Left lung (tissue), 14 donors: ENCODE measurements at regions of chr7 and their contacts with region 1.

Region 1: DNA sequence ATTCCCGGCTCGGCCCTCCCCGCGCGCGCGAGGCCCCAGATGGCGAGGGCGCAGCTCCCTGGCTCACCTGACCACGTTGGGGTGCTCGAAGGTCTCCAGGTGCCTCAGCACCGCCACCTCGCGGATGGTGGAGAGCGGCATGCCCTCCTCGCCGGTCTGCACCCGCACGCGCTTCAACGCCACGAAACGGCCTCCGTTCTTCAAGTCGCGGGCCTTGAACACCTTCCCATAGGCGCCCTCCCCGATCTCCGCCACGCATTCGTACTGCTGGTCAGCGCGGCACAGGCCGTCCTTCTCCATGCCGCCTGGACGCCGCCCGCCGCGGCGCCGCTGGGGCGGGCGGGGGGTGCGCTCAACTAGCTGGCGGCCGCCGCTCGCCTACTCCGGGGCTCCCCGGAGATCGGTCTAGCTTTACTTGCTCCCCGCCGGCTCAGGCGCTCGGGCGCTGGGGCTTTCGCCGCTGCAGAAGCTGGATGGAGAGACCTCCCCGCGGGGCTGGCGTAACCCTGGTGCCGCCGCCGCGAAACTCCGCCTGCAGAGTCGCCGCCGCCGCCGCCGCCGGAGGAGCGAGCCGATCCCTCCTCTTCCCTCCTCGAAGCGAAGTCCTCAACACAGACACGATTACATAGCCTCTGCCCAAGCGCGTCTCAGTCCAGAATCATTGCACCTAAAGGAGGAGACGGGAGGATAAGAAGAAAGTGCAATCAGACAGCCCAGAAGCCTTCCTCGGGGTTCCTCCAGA is 3.2 kb downstream of the CDK6 start:
- DNase-seq: peak; percentile 77 to 96 (median 90)
- ATAC-seq: peak; percentile 85
- H3K4me3 ChIP-seq: peak overlapping the region; percentile 82 to 93
- H3K27ac ChIP-seq: peak overlapping the region; percentile 86 to 87
- H3K4me1 ChIP-seq: peaks cover 2 to 35% of the 10 kb centered on the region in 2 donors
- H3K27me3 ChIP-seq: no peaks in the 10 kb centered on the region
- CTCF ChIP-seq: peak; percentile 84 to 88

Region 2: GRCh38 chr7:92621026-92621540 is 212.1 kb before region 1 on chr7:
- intact Hi-C with region 1: loop called in 1 of 2 experiments (anchors 5 kb)
- DNase-seq: peak in 3 of 4 donors; percentile 71 to 89 (median 72)
- ATAC-seq: peak; percentile 96
- H3K4me3 ChIP-seq: no peak overlapping the region
- H3K27ac ChIP-seq: peak overlapping the region; percentile 28 to 31
- H3K4me1 ChIP-seq: peaks cover 0 to 21% of the 10 kb centered on the region in 2 donors
- H3K27me3 ChIP-seq: no peaks in the 10 kb centered on the region
- CTCF ChIP-seq: peak; percentile 58 to 61

Region 3: DNA sequence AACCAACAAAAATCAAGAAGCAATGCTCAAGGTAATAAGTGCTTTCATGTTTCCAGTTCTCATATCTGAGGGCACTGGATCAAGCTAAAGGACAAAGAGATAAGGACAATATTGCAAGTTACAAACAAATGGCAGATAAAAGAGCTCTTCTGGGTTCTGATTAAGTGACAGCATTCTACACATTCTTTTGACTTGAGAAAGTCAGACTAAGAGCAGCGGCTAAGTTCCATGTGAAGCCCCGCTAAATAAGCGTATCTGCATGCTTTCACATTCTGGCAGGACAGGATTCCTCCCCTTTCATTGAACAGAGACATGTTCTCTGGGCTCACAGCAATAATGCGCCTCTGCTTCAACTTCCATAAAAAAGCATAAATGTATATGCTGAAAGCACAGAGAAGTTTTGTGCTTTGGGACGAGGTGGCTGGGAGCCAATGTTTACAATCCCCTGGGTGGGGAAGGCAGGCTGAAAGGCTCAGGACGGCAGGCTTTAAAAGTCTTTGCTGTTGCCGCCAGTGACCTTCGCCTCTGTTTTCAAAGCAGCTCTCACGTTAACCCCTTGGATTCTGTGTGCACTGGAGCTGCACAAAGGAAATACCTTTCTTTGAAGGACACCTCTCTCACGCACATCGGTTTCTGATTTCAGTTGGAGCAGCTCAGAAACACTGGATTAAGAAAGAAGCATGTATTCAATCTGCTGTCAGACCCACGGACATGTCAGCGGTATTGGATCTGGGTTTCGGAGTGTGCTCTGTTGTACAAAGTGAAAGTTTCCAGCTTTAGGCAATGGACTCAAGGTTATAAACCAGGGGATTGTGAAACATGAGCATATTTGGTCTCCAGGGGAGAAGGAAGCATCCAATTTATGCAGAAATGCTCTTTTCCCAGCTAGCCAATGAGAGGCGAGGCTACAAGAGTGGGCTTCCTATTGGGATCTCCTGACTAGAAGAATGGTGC is 137.6 kb before region 1 on chr7:
- intact Hi-C with region 1: loop called in 1 of 2 experiments (anchors 5 kb)
- DNase-seq: peak in 3 of 4 donors; percentile 44 to 88 (median 85)
- ATAC-seq: peak; percentile 74
- H3K4me3 ChIP-seq: peak overlapping the region; percentile 28 to 39
- H3K27ac ChIP-seq: peak overlapping the region; percentile 77 to 82
- H3K4me1 ChIP-seq: peaks cover 9 to 42% of the 10 kb centered on the region in 2 donors
- H3K27me3 ChIP-seq: no peaks in the 10 kb centered on the region
- CTCF ChIP-seq: no peak

Region 4: DNA sequence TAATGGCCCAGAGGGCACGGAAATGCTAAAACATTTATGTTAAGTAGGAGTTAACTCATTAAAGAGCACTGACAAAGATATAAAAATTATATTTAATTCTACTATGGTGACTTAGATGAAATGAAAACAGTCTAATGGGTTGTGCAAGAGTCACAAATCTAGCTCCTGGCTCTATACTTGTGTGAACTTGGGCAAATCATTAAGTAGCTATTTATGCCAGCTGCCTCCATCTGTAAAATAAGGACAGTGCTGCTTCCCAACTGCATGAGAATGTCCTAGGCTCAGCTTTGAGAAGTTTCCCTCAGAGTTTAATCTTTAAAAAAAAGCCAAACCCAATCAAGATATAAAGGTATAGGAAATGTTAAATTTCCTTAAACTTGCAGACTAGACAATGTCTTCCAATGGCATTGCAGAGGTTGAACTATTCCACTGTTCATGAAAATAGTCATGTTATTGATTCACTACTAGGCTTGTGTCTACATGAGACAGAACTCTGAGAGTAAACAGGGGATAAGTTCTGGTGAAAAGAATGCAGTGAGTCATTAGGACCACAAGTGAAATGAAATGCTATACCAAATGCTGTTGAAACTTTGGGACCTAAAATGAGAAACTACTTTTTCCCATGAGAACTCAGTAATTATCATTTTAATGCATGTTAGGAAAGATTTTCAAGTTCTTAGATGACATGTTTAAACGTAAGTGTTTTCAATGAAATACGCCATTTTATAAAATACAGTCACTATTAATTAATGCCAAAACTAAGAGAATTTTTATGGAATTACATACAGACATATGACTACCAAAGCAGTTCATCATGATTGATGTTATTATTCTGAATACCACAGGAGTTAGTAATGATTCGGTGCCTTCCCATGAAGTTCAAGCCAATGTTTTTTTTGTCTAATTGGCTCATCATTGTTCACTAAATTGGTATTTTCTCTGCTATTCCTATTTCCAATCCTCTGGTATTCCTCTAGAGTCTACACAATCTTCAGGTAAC is 81.0 kb before region 1 on chr7:
- intact Hi-C with region 1: no loop called
- DNase-seq: no peak
- ATAC-seq: peak; percentile 45
- H3K4me3 ChIP-seq: no peak overlapping the region
- H3K27ac ChIP-seq: peak overlapping the region in 1 of 2 donors; percentile 30
- H3K4me1 ChIP-seq: peaks cover 0 to 17% of the 10 kb centered on the region in 2 donors
- H3K27me3 ChIP-seq: no peaks in the 10 kb centered on the region
- CTCF ChIP-seq: no peak

Region 5: DNA sequence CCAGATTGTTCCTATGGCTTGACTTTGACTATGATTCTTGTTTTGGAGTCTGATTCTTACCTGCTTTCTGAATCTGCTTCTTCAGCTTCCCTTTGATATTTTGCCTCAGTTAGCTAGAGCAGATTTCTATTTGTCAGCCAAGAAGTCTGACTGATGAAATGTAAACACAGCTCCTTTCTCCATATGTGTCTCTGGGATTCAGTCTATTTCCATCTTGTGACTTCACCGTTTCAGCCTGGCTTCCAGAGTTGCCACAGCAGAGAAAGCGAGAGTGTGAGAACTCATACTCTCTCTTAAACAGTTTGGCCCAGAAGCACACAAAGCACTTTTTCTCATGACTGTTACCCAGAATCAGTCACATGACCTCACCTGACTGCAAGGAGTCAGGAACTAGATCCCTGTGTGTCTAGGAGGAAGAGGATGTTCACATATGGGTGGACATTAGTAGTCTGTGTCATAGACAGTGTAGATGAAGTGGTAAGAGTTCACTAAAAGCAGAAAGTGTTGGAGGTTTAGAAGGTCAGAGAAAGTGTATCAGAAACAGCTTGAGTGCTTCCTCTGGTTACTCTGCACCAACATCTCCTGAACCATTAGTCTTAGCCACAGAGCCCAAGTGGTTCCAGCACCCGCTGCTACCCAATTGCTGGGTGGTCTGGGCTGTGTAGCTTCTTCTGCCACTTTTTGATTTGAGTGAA is 106.6 kb after region 1 on chr7:
- intact Hi-C with region 1: no loop called
- DNase-seq: no peak
- ATAC-seq: no peak
- H3K4me3 ChIP-seq: no peak overlapping the region
- H3K27ac ChIP-seq: no peak overlapping the region
- H3K4me1 ChIP-seq: no peaks in the 10 kb centered on the region
- H3K27me3 ChIP-seq: no peaks in the 10 kb centered on the region
- CTCF ChIP-seq: no peak

Region 6: DNA sequence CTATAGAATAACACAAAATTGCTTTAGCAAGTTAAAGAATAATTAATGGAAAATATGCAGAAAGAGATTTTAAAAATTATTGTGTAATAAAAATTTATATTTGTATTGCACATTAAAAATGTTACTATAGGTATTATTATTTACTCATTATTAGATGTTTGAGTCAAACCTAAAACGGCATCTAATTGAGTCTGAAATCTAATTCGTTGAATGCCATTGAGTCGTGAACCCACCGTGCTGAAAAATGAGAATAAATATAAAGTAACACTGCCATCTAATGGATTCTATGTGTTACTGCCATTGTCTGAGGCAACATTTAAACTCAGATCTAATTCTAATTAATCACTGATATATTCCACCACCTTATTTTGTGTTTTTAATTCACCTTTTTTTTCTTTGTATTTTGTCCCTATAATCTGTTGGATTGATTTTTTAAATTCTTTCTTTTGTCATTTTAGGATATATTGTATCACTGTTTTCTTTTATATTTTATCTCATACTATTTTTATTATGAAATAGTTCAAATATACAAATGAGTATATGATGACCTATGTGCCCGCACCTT is 222.4 kb after region 1 on chr7:
- intact Hi-C with region 1: no loop called
- DNase-seq: peak in 2 of 4 donors; percentile 25 to 49
- ATAC-seq: peak; percentile 80
- H3K4me3 ChIP-seq: no peak overlapping the region
- H3K27ac ChIP-seq: no peak overlapping the region
- H3K4me1 ChIP-seq: peaks cover 0 to 4% of the 10 kb centered on the region in 2 donors
- H3K27me3 ChIP-seq: no peaks in the 10 kb centered on the region
- CTCF ChIP-seq: peak; percentile 78 to 84